Transverse colon (tissue), 4 donors: ENCODE measurements at regions of chr15 and their contacts with region 1.

Region 1: DNA sequence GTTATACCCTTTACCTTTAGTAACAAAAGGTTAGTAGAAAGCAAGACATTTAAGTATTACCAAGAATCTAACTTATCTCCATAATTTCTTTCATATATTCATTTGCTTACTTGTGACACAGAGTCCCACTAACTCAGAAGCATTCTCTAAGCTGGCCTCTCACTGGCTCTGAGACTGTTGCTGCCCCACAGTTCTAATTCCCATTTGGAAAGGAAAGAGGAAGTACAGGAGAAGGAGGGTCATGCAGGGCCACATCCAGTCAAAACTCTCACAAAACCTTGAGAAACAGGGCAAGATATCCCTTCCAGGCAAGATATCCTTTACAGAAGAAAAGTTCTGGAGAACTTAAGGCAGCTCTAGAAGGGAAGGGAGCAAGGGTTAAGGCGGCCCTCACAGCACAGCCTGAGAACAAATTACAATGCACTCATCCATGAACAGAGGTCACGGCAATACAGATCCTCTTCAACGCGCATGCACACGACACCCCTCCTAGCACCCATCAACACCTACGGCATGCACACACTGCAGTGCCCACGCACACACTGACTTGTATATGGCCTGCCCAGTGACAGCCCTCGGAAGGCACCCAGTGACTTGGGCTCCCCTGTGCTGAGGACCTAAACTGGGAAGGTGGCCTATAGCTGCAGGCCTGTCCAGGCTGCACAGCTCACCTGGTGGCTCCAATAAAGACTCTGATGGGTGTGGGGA is 13.0 kb upstream of the MYO5C start:
- DNase-seq: no peak
- H3K4me3 ChIP-seq: no peak overlapping the region
- H3K27ac ChIP-seq: no peak overlapping the region
- H3K4me1 ChIP-seq: no peaks in the 10 kb centered on the region
- H3K27me3 ChIP-seq: no peaks in the 10 kb centered on the region
- CTCF ChIP-seq: no peak
- EP300 ChIP-seq: no peak
- POLR2A ChIP-seq: no peak

Region 2: DNA sequence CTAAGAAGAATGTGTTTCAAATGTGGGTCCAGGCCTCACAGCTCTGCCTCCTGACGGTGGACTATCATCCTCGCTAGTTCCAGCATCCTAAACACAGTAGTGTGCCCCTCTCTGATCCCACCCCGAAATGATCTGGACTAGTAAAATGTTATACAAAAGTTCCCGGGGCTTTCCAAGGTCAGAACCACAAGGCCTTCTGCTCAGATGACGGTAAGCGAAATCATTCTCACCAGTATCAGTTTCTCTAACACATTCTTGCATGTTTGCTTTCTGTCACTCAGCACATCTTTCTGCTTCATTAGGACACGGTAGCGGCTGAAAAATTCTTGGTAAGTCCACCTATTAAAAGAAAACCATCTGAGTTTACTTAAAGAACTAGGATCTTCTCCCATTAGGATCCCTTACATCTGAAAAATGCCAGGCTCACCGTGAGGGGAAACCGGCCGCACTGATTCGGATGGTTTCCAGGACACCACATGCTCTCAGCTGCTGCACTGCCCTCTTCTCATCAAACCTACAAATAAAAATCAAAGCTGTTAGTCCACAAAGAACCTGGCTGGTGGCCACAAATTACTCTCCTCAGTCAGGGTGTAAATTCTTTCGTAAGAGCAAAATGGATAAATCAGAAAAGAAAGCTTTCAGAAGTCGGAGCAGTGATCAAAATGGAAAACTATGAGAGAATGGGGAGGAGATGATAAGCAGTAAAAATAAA is 71.0 kb after region 1 on chr15:
- in situ Hi-C with region 1: no loop called
- intact Hi-C with region 1: loop called (anchors 2 kb)
- DNase-seq: no peak
- H3K4me3 ChIP-seq: no peak overlapping the region
- H3K27ac ChIP-seq: peak overlapping the region in 1 of 4 donors; percentile 13
- H3K4me1 ChIP-seq: no peaks in the 10 kb centered on the region
- H3K27me3 ChIP-seq: no peaks in the 10 kb centered on the region
- CTCF ChIP-seq: no peak
- EP300 ChIP-seq: no peak
- POLR2A ChIP-seq: no peak